ENCODE measurements at regions of chr3 and their contacts with region 1.

Region 1: GRCh38 chr3:25594007-25594502 is 70.7 kb downstream of the TOP2B start:
- DNase-seq: no peak
- H3K4me3 ChIP-seq: no peak overlapping the region
- H3K27ac ChIP-seq: no peak overlapping the region
- H3K4me1 ChIP-seq: peaks cover 0 to 17% (median 1%) of the 10 kb centered on the region in 4 donors
- H3K27me3 ChIP-seq: no peaks in the 10 kb centered on the region
- CTCF ChIP-seq: peak; percentile 76 to 87 (median 79)
- EP300 ChIP-seq: no peak
- POLR2A ChIP-seq: no peak

Region 2: GRCh38 chr3:24773798-24774197 is 820.3 kb before region 1 on chr3:
- in situ Hi-C with region 1: loop called (anchors 10 to 25 kb)
- intact Hi-C with region 1: loop called (anchors 10 kb)
- DNase-seq: peak; percentile 18
- H3K4me3 ChIP-seq: no peak overlapping the region
- H3K27ac ChIP-seq: no peak overlapping the region
- H3K4me1 ChIP-seq: no peaks in the 10 kb centered on the region
- H3K27me3 ChIP-seq: no peaks in the 10 kb centered on the region
- CTCF ChIP-seq: peak; percentile 46 to 68 (median 58)
- EP300 ChIP-seq: no peak
- POLR2A ChIP-seq: no peak

Region 3: DNA sequence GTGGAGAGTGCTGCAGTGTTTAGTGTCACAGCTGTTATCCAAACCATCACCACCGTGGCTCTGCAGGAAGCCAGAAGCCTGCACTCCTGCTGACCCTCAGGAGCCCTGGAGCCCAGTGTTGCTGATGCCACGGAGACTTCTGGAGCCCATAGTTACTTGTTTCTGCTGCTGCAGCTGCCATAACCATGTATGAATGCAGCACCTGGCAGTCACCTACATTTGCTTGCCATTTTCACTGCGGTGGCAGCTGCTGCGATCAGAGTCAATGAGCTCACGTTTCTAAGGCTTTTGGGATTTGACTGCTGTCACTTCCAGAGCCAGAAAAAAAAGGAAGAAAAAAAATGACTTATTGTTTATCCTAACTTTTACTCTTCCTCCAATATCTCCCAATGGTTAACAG is 800.2 kb before region 1 on chr3:
- in situ Hi-C with region 1: loop called in 1 of 4 experiments (anchors 25 kb)
- intact Hi-C with region 1: no loop called
- DNase-seq: no peak
- H3K4me3 ChIP-seq: no peak overlapping the region
- H3K27ac ChIP-seq: no peak overlapping the region
- H3K4me1 ChIP-seq: no peaks in the 10 kb centered on the region
- H3K27me3 ChIP-seq: no peaks in the 10 kb centered on the region
- CTCF ChIP-seq: no peak
- EP300 ChIP-seq: no peak
- POLR2A ChIP-seq: no peak

Region 4: GRCh38 chr3:24963762-24964625 is 630.1 kb before region 1 on chr3:
- in situ Hi-C with region 1: loop called in 1 of 4 experiments (anchors 25 kb)
- intact Hi-C with region 1: no loop called
- DNase-seq: no peak
- H3K4me3 ChIP-seq: no peak overlapping the region
- H3K27ac ChIP-seq: no peak overlapping the region
- H3K4me1 ChIP-seq: no peaks in the 10 kb centered on the region
- H3K27me3 ChIP-seq: no peaks in the 10 kb centered on the region
- CTCF ChIP-seq: peak; percentile 39 to 51 (median 45)
- EP300 ChIP-seq: no peak
- POLR2A ChIP-seq: no peak

Region 5: GRCh38 chr3:25007974-25008658 is 585.9 kb before region 1 on chr3:
- in situ Hi-C with region 1: loop called in 2 of 4 experiments (anchors 25 kb)
- intact Hi-C with region 1: no loop called
- DNase-seq: no peak
- H3K4me3 ChIP-seq: no peak overlapping the region
- H3K27ac ChIP-seq: no peak overlapping the region
- H3K4me1 ChIP-seq: peaks cover 0 to 3% (median 0%) of the 10 kb centered on the region in 4 donors
- H3K27me3 ChIP-seq: no peaks in the 10 kb centered on the region
- CTCF ChIP-seq: no peak
- EP300 ChIP-seq: no peak
- POLR2A ChIP-seq: no peak

Region 6: GRCh38 chr3:25648107-25648535 is 54.1 kb after region 1 on chr3:
- in situ Hi-C with region 1: no loop called
- intact Hi-C with region 1: no loop called
- DNase-seq: peak; percentile 84
- H3K4me3 ChIP-seq: no peak overlapping the region
- H3K27ac ChIP-seq: no peak overlapping the region
- H3K4me1 ChIP-seq: peaks cover 0 to 18% (median 2%) of the 10 kb centered on the region in 4 donors
- H3K27me3 ChIP-seq: no peaks in the 10 kb centered on the region
- CTCF ChIP-seq: peak; percentile 86 to 92 (median 89)
- EP300 ChIP-seq: no peak
- POLR2A ChIP-seq: no peak